Ovary (tissue), 10 donors: ENCODE measurements at regions of chr6 and their contacts with region 1.

Region 1: DNA sequence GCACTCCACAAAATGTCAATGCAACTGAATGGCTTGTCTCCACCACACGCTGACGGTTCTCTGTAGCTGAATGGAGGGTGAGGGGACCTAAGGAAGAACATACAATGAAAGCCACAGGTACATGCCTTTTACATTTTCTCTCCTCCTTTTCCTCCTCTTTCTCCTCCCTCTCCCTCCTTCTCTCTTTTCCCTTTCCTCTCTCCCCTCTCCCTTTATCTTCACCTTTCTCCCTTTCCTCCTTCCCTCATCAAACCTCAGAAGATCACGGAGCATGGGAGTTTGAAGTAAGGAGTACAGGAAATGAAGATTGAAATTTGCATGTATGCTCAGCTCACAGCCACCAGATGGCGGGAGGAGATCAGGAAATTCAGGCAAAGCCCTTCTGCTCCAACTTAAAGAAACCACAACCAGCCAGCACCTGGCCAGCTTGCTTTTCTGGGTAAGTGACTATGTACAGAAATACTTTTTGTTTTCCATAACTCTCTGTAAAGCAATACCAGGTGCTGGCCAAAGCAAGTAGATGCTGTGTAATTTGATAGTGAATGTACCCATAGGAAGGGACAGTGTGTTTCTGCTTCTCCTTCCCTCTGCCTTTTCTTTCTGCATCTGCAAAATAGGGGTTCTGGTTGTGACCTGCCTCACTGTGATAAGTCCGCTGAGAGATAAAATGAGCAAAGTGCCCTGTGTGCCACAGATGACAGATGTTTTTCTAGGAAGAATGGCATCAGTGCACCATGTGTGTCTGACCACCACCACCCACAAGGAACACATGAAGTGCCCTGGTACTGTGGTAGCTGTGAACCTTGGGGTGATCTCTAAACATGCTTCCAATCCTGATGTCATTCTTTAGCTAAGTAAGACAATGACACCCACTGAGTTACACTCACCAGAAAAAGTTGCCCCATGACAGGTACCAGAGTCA is 18.6 kb upstream of the FOXO3 start:
- DNase-seq: peak; percentile 68 to 80 (median 77)
- H3K4me3 ChIP-seq: no peak overlapping the region
- H3K27ac ChIP-seq: no peak overlapping the region
- H3K4me1 ChIP-seq: no peaks in the 10 kb centered on the region
- H3K27me3 ChIP-seq: no peaks in the 10 kb centered on the region
- CTCF ChIP-seq: peak; percentile 49 to 95 (median 94)
- EP300 ChIP-seq: no peak
- POLR2A ChIP-seq: no peak

Region 2: GRCh38 chr6:108782179-108783041 is 240.3 kb after region 1 on chr6:
- intact Hi-C with region 1: loop called in 2 of 4 experiments (anchors 5 to 10 kb)
- DNase-seq: peak; percentile 83 to 88 (median 86)
- H3K4me3 ChIP-seq: peak overlapping the region; percentile 28
- H3K27ac ChIP-seq: no peak overlapping the region
- H3K4me1 ChIP-seq: no peaks in the 10 kb centered on the region
- H3K27me3 ChIP-seq: no peaks in the 10 kb centered on the region
- CTCF ChIP-seq: peak; percentile 23 to 73 (median 71)
- EP300 ChIP-seq: no peak
- POLR2A ChIP-seq: no peak

Region 3: GRCh38 chr6:108835218-108835850 is 293.2 kb after region 1 on chr6:
- intact Hi-C with region 1: loop called in 3 of 4 experiments (anchors 2 to 10 kb)
- DNase-seq: peak; percentile 74 to 89 (median 86)
- H3K4me3 ChIP-seq: no peak overlapping the region
- H3K27ac ChIP-seq: no peak overlapping the region
- H3K4me1 ChIP-seq: no peaks in the 10 kb centered on the region
- H3K27me3 ChIP-seq: no peaks in the 10 kb centered on the region
- CTCF ChIP-seq: peak; percentile 79 to 85 (median 82)
- EP300 ChIP-seq: no peak
- POLR2A ChIP-seq: no peak

Region 4: GRCh38 chr6:108896111-108896661 is 354.1 kb after region 1 on chr6:
- intact Hi-C with region 1: loop called (anchors 5 kb)
- DNase-seq: no peak
- H3K4me3 ChIP-seq: no peak overlapping the region
- H3K27ac ChIP-seq: no peak overlapping the region
- H3K4me1 ChIP-seq: peaks cover 2% of the 10 kb centered on the region
- H3K27me3 ChIP-seq: no peaks in the 10 kb centered on the region
- CTCF ChIP-seq: no peak
- EP300 ChIP-seq: no peak
- POLR2A ChIP-seq: no peak

Region 5: GRCh38 chr6:109059571-109060021 is 517.5 kb after region 1 on chr6:
- intact Hi-C with region 1: loop called in 2 of 4 experiments (anchors 10 kb)
- DNase-seq: no peak
- H3K4me3 ChIP-seq: no peak overlapping the region
- H3K27ac ChIP-seq: no peak overlapping the region
- H3K4me1 ChIP-seq: peaks cover 2% of the 10 kb centered on the region
- H3K27me3 ChIP-seq: no peaks in the 10 kb centered on the region
- CTCF ChIP-seq: no peak
- EP300 ChIP-seq: no peak
- POLR2A ChIP-seq: no peak

Region 6: GRCh38 chr6:109073344-109074132 is 531.4 kb after region 1 on chr6:
- intact Hi-C with region 1: loop called (anchors 5 to 10 kb)
- DNase-seq: peak in 1 of 5 donors; percentile 48
- H3K4me3 ChIP-seq: no peak overlapping the region
- H3K27ac ChIP-seq: no peak overlapping the region
- H3K4me1 ChIP-seq: no peaks in the 10 kb centered on the region
- H3K27me3 ChIP-seq: no peaks in the 10 kb centered on the region
- CTCF ChIP-seq: peak; percentile 42 to 69 (median 64)
- EP300 ChIP-seq: no peak
- POLR2A ChIP-seq: no peak